Natural killer cell (primary cell): ENCODE measurements at regions of chr1 and their contacts with region 1.

Region 1: DNA sequence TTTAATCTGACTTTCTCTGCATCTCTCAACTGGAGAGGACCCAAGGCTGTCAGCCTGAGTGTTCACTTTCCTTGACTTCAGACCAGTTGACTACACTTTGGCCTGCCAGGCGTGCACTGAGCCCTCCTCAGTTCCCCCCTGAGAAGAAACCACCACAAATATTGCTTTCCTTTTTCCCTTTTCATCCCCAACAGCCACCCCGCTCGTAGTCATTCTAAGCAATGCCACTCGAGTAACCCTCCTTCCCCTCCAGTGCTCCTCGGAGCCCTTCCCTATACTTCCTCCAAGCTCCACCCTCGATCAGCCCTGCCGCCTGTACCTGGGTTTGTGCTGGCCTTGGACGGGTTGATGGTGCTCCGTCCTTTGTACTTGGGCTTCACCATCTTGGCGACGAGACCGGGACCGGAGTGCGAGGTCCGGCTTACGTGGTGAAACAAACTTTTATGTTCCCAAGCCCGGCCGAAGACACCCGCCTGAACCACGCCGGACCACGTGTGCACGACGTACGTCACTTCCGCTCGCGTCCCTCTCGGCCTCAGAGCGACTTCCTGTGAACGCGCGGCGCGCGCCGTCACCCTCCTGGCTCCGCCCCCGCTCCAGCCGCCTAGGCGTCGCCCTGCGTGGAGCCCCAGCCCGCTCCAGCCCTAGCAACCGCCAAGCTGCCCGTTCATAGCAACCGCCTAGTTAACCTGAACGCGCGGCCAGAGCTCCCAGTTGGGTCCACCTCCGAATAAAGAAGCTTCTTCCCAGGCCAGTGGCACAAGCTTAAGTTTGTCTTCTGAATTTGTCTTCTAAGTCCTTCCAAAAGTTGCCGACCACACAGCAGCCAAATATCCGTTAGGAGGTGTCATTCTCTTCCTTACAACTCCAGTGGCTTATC is at the start of gene GNL2:
- DNase-seq: peak; percentile 97 to 100
- ATAC-seq: peak; percentile 96 to 100 (median 98)
- H3K4me3 ChIP-seq: peak within 1 kb of the TSS; percentile 87
- H3K4me3 Mint-ChIP-seq: peak within 1 kb of the TSS; percentile 99
- H3K27ac ChIP-seq: peak within 1 kb of the TSS; percentile 94
- H3K27ac Mint-ChIP-seq: peak within 1 kb of the TSS; percentile 99 to 100
- H3K4me1 ChIP-seq: peaks cover 18% of the 10 kb centered on the region
- H3K4me1 Mint-ChIP-seq: peaks cover 23% of the 10 kb centered on the region in 2 donors
- H3K27me3 ChIP-seq: no peaks in the 10 kb centered on the region
- H3K27me3 Mint-ChIP-seq: no peaks in the 10 kb centered on the region
- CTCF ChIP-seq: no peak
- total RNA-seq, gene GNL2: 70.7 to 89.9 (median 85.8) TPM

Region 2: DNA sequence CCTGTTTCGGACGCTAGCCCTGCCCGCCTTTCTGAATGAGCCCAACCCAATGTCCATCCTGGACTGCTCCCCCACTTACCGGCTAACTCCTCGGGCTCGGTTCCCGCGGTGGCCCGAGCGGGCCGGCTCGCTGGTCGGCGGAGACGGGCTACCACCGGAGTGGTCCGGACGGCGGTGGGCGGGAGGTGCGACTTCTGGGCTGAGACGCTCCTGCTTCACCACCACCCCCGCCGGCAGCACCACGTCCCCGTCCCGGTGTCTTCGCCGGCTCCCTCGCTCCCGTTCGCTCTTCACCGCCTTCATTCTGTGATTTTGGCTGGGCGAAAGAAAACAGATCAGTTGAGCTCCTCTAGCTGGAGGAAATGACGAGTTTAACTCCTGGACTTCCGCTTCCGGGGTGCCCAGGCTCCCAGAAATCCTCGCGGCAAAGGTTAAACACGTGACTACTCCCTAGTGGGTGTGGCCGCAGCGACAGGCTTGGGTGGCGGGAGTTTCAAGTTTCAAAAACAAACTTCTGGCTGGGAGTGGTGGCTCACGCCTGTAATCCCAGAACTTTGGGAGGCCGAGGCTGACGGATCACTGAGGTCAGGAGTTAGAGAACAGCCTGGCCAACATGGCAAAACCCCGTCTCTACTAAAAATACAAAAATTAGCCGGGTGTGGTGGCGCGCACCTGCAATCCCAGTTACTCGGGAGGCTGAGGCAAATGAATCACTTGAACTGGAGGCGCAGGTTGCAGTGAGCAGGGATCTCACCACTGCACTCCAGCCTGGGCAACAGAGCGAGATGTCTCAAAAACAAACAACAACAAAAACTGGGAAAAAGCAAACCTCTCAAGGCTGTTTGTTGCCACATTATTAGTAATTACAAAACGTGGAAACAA is 41.5 kb before region 1 on chr1 and contains the start of gene SNIP1:
- intact Hi-C with region 1: loop called (anchors 5 kb)
- DNase-seq: peak; percentile 85 to 96
- ATAC-seq: peak; percentile 94 to 99 (median 94)
- H3K4me3 ChIP-seq: peak within 1 kb of the TSS; percentile 81
- H3K4me3 Mint-ChIP-seq: peak within 1 kb of the TSS; percentile 99
- H3K27ac ChIP-seq: peak within 1 kb of the TSS; percentile 84
- H3K27ac Mint-ChIP-seq: peak within 1 kb of the TSS; percentile 93 to 98
- H3K4me1 ChIP-seq: peaks cover 15% of the 10 kb centered on the region
- H3K4me1 Mint-ChIP-seq: peaks cover 38 to 45% of the 10 kb centered on the region in 2 donors
- H3K27me3 ChIP-seq: no peaks in the 10 kb centered on the region
- H3K27me3 Mint-ChIP-seq: peaks cover 0 to 2% of the 10 kb centered on the region in 2 donors
- CTCF ChIP-seq: no peak
- total RNA-seq, gene SNIP1: 67.2 to 74.8 (median 68.1) TPM

Region 3: GRCh38 chr1:37846647-37847339 is 251.1 kb after region 1 on chr1:
- intact Hi-C with region 1: loop called (anchors 10 kb)
- DNase-seq: no peak
- ATAC-seq: no peak
- H3K4me3 ChIP-seq: no peak overlapping the region
- H3K4me3 Mint-ChIP-seq: peak overlapping the region; percentile 49
- H3K27ac ChIP-seq: peak overlapping the region; percentile 19
- H3K27ac Mint-ChIP-seq: peak overlapping the region; percentile 14 to 82
- H3K4me1 ChIP-seq: peaks cover 6% of the 10 kb centered on the region
- H3K4me1 Mint-ChIP-seq: peaks cover 32 to 36% of the 10 kb centered on the region in 2 donors
- H3K27me3 ChIP-seq: no peaks in the 10 kb centered on the region
- H3K27me3 Mint-ChIP-seq: no peaks in the 10 kb centered on the region
- CTCF ChIP-seq: no peak

Region 4: DNA sequence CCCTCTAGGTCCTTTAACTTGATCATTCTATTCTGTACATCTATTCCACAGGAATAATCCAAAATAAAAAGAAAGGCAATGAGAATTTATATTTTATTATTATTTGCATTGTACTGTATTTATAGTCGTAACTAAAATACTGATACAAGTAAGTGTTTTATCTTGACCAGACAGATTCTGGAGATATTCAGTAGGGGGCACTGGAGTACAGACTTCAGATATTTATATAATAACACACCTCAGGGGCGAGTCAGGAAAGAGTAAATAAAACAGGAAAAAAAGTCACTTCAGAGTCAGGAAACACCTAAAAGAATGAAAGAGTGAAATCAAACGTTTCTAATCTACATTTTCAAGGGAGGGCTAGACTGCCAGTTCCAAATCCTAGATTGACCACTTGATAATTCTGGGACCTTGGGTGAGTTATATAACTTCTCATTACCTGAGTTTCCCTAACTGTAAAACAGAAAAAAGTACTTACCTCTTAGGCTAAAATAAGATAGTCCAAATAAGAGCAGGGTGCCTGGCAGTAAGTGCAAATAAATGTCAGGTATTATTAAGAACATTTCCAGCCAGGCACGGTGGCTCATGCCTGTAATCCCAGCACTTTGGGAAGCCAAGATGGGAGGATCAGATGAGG is 294.8 kb after region 1 on chr1:
- intact Hi-C with region 1: no loop called
- DNase-seq: peak in 1 of 2 donors; percentile 64
- ATAC-seq: peak; percentile 46 to 76 (median 75)
- H3K4me3 ChIP-seq: no peak overlapping the region
- H3K4me3 Mint-ChIP-seq: peak overlapping the region; percentile 32
- H3K27ac ChIP-seq: peak overlapping the region; percentile 30
- H3K27ac Mint-ChIP-seq: peak overlapping the region; percentile 54 to 85
- H3K4me1 ChIP-seq: no peaks in the 10 kb centered on the region
- H3K4me1 Mint-ChIP-seq: peaks cover 13 to 14% of the 10 kb centered on the region in 2 donors
- H3K27me3 ChIP-seq: no peaks in the 10 kb centered on the region
- H3K27me3 Mint-ChIP-seq: no peaks in the 10 kb centered on the region
- CTCF ChIP-seq: peak; percentile 66